Common myeloid progenitor, CD34-positive (primary cell): ENCODE measurements at regions of chr3 and their contacts with region 1.

Region 1: DNA sequence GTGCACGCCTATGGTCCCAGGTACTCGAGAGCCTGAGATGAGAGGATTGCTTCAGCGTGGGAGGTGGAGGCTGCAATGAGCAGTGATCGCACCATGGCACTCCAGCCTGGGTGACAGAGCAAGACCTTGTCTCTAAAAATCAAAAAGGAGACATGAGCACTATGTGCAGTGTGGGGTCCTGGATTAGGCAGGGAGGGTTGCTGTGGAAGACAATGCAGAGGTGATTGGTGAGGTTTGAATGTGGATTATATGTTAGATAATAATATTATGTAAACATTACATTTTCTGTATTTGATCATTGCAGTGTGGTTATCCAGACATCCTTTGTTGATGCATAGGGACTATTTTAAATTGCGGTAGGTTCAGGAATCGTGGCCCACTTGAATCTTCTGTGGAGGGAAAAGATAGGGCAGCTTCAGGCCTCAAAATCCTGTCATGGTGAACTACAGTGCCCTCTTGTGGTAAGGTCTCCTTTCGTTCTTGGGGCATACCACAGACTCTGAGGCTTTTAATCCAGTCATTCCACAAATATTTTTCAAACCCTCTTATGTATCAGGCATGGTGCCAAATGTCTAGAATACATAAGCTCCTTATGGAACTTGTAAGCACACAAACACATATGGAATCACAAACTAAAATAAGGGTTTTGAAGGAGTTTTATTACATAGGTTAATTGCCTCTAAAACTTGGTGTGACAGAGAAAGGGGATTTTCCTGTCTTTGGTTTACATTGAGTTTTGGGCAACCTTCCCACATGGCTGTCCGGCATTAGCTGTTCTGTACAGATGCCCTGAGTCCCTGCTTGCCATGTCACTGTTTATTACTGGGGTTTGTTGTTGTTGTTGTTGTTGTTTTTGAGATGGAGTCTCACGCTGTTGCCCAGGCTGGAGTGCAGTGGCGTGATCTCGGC is 37.7 kb downstream of the GPD1L start:
- DNase-seq: peak; percentile 79 to 87 (median 82)
- H3K4me3 ChIP-seq: no peak overlapping the region
- H3K27ac ChIP-seq: no peak overlapping the region
- H3K4me1 ChIP-seq: peaks cover 6 to 37% (median 31%) of the 10 kb centered on the region in 4 experiments
- H3K27me3 ChIP-seq: no peaks in the 10 kb centered on the region

Region 2: GRCh38 chr3:32018757-32019564 is 125.1 kb before region 1 on chr3:
- CTCF ChIA-PET with region 1: interaction called, 50 read pairs
- POLR2A ChIA-PET with region 1: no interaction called
- DNase-seq: peak; percentile 70 to 73 (median 72)
- H3K4me3 ChIP-seq: no peak overlapping the region
- H3K27ac ChIP-seq: no peak overlapping the region
- H3K4me1 ChIP-seq: no peaks in the 10 kb centered on the region
- H3K27me3 ChIP-seq: no peaks in the 10 kb centered on the region

Region 3: DNA sequence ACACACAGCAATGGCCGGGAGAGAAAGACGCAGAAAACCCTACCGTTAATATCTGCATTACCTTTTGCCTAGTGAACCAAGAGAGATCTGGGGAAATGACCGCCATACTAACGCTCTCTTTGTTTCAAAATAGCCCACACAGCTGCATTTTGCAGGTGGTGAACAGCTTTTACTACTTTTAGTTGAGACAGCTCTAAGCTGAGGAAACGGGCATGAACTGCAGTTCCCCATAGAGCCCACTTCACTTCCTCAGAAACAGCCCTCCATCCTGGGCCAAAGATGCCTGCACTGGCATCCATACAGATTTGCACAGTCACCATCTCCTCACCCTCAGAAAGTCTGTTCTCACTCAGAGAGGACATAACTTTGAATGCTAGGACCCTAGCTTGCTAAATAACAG is 117.5 kb before region 1 on chr3:
- CTCF ChIA-PET with region 1: interaction called, 11 read pairs
- POLR2A ChIA-PET with region 1: no interaction called
- DNase-seq: peak; percentile 32 to 84 (median 82)
- H3K4me3 ChIP-seq: no peak overlapping the region
- H3K27ac ChIP-seq: no peak overlapping the region
- H3K4me1 ChIP-seq: peaks cover 5 to 9% (median 6%) of the 10 kb centered on the region in 4 experiments
- H3K27me3 ChIP-seq: no peaks in the 10 kb centered on the region

Region 4: DNA sequence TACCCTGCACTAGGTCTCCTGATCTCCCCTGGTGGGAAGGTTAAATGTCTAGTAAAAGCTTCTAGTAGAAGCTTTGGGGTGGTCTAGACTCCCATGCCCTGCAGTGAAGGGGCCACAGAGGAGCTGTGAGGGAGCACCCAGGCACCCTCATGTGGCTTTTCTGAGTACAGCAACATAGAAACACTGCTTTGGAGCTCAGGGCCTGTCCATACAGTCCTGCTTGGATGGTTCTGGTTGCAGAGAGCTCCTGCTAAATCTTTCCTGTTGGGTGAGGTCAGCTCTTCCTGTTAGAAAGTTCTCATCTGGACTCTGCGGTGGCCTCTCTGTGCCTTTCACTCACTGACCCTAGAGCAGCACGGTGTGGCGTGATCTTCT is 10.1 kb after region 1 on chr3:
- CTCF ChIA-PET with region 1: interaction called, 19 read pairs
- POLR2A ChIA-PET with region 1: no interaction called
- DNase-seq: peak in 1 of 3 donors; percentile 10
- H3K4me3 ChIP-seq: no peak overlapping the region
- H3K27ac ChIP-seq: no peak overlapping the region
- H3K4me1 ChIP-seq: no peaks in the 10 kb centered on the region
- H3K27me3 ChIP-seq: no peaks in the 10 kb centered on the region

Region 5: GRCh38 chr3:32194653-32195052 is 50.5 kb after region 1 on chr3:
- CTCF ChIA-PET with region 1: no interaction called
- POLR2A ChIA-PET with region 1: no interaction called
- DNase-seq: peak in 1 of 3 donors; percentile 10
- H3K4me3 ChIP-seq: no peak overlapping the region
- H3K27ac ChIP-seq: no peak overlapping the region
- H3K4me1 ChIP-seq: no peaks in the 10 kb centered on the region
- H3K27me3 ChIP-seq: no peaks in the 10 kb centered on the region

Region 6: GRCh38 chr3:32583708-32584107 is 439.6 kb after region 1 on chr3:
- CTCF ChIA-PET with region 1: no interaction called
- POLR2A ChIA-PET with region 1: no interaction called
- DNase-seq: no peak
- H3K4me3 ChIP-seq: no peak overlapping the region
- H3K27ac ChIP-seq: no peak overlapping the region
- H3K4me1 ChIP-seq: no peaks in the 10 kb centered on the region
- H3K27me3 ChIP-seq: no peaks in the 10 kb centered on the region